Lower leg skin (tissue), 4 donors: ENCODE measurements at regions of chr16 and their contacts with region 1.

Region 1: DNA sequence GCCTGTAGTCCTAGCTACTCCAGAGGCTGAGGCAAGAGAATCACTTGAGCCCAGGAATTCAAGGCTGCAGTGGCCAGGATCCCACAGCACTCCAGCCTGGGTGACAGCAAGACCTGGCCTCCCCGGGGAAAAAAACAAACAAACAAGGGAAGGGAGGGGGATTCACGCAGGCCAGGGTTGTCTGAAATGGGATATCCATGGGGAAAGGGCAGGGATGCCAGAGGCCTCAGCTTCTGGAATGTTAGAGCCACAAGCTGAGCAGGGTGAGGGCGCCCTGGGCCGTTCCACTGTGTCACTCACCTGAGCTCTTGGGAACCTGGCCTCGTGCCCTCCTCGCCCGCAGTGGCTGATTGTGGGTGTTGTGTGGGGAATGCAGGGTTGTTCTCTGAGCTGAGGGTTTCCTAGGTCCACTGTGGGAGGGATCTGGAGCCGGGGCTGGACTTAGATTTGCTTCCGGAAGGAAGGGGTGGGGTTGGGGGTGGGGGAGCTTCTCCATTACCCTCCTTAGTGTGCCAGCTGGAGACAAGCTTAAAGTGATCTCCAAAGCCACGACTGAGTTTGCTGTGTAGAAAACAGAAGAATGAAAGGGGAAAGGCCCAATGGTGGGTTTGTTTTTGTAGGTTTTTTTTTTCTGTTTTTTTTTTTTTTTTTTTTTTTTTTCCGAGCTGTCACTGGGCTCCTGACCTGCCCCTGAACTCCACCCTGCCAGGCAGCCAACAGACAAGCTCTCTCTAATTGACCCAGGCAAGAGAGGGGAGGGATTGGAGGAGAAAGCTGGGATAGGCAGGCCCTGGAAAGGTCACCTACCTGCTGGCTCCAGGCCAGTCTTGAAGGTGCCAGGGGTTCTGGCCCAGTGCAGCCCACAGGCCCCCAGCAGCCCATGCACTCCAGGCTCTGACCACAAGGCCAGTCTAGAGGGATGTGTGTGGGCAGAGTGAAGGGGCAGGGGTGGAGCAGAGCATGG is at the start of gene SULT1A1:
- DNase-seq: peak; percentile 54 to 95
- H3K4me3 ChIP-seq: no peak within 1 kb of the TSS
- CTCF ChIP-seq: no peak
- POLR2A ChIP-seq: no peak
- total RNA-seq, gene SULT1A1: 2.4 to 7.4 (median 3.1) TPM

Region 2: DNA sequence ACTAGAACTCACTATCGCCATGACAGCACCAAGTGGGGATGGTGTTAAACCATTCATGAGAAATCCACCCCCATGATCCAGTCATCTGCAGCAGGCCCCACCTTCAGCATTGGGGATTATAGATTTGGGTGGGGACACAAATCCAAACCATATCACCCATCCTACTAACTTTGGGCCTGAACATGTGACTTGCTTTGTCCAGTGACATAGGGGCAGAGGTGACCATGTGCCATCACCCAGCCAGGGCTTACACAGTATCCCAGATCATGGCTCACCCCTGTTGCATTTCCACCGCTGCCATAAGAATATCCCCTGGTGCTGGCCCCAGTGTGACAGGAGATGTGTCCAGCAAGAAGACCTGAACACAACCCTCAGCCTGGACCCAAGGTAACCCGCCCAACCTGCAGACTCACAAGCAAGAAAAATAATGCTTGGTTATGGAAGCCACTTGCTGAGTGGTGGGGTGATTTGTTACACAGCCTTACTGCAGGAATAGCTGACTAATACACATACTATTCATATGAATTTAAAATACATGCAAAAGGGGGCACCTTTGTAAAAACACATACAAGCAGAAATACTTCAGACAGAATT is 677.3 kb before region 1 on chr16:
- intact Hi-C with region 1: no loop called
- DNase-seq: no peak
- H3K4me3 ChIP-seq: no peak overlapping the region
- CTCF ChIP-seq: no peak
- POLR2A ChIP-seq: no peak

Region 3: GRCh38 chr16:28280881-28281836 is 328.8 kb before region 1 on chr16:
- intact Hi-C with region 1: loop called (anchors 10 kb)
- DNase-seq: no peak
- H3K4me3 ChIP-seq: no peak overlapping the region
- CTCF ChIP-seq: no peak
- POLR2A ChIP-seq: no peak

Region 4: GRCh38 chr16:28504707-28505409 is 105.1 kb before region 1 on chr16:
- intact Hi-C with region 1: no loop called
- DNase-seq: no peak
- H3K4me3 ChIP-seq: no peak overlapping the region
- CTCF ChIP-seq: no peak
- POLR2A ChIP-seq: no peak